Naive thymus-derived CD8-positive, alpha-beta T cell (primary cell): ENCODE measurements at regions of chr9 and their contacts with region 1.

Region 1: DNA sequence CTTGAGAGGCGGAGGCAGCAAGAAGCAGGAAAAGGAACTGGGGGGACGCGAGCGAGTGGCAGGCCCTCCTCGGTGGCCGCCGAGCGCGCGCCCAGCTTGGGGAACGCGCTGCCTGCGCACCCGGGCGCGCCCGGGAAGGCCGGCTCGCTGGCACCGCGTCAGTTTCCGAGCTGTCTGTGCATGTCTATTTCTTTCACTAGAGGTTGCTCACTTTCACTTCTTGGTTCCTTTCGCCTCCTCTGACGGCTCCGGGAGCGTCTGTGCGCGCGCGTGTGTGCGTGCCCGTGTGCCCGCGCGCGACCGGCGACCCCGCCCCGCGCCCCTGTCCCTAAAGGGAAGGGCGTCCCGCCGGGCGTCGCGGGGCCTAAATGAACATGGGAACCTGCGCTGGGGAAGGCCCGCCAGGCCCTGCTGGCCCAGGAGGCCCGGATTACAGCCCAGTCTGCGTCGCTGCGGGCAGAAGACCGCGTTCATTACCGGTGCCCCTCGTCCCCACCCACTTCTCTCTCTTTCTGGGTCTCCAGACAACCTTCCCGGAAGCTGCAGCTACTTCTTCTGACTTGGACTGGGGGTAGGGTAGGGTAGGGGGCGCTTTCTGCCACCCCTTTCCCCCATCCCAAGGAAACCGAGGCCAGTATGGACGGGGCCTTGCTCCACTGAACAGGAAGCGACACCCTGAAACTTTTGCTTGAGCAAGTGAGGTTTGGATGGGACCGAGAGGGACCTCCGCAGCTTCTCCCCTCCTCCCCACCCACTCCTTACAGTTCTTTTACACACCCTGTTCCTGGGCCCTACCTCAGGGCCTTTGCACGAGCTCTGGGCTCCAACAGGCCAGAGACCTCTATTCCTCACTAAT is 205.7 kb upstream of the IER5L start:
- DNase-seq: peak; percentile 67 to 89 (median 78)
- ATAC-seq: peak; percentile 89 to 91
- H3K4me3 Mint-ChIP-seq: peak overlapping the region; percentile 76 to 89 (median 82)
- H3K27ac Mint-ChIP-seq: peak overlapping the region; percentile 90 to 99 (median 97)
- H3K4me1 Mint-ChIP-seq: peaks cover 9 to 23% (median 17%) of the 10 kb centered on the region in 4 donors
- H3K27me3 Mint-ChIP-seq: no peaks in the 10 kb centered on the region

Region 2: GRCh38 chr9:129021081-129021480 is 362.7 kb before region 1 on chr9:
- POLR2A ChIA-PET with region 1: no interaction called
- DNase-seq: no peak
- ATAC-seq: no peak
- H3K4me3 Mint-ChIP-seq: no peak overlapping the region
- H3K27ac Mint-ChIP-seq: peak overlapping the region in 2 of 10 donors; percentile 9 to 48
- H3K4me1 Mint-ChIP-seq: peaks cover 14 to 29% (median 17%) of the 10 kb centered on the region in 4 donors
- H3K27me3 Mint-ChIP-seq: no peaks in the 10 kb centered on the region

Region 3: GRCh38 chr9:129320575-129321263 is 63.1 kb before region 1 on chr9:
- POLR2A ChIA-PET with region 1: interaction called, 20 read pairs
- DNase-seq: peak in 9 of 10 donors; percentile 47 to 79 (median 67)
- ATAC-seq: peak; percentile 93 to 97
- H3K4me3 Mint-ChIP-seq: peak overlapping the region; percentile 74 to 94 (median 89)
- H3K27ac Mint-ChIP-seq: peak overlapping the region; percentile 59 to 96 (median 90)
- H3K4me1 Mint-ChIP-seq: peaks cover 10 to 26% (median 17%) of the 10 kb centered on the region in 4 donors
- H3K27me3 Mint-ChIP-seq: peaks cover 0 to 3% (median 0%) of the 10 kb centered on the region in 5 donors

Region 4: DNA sequence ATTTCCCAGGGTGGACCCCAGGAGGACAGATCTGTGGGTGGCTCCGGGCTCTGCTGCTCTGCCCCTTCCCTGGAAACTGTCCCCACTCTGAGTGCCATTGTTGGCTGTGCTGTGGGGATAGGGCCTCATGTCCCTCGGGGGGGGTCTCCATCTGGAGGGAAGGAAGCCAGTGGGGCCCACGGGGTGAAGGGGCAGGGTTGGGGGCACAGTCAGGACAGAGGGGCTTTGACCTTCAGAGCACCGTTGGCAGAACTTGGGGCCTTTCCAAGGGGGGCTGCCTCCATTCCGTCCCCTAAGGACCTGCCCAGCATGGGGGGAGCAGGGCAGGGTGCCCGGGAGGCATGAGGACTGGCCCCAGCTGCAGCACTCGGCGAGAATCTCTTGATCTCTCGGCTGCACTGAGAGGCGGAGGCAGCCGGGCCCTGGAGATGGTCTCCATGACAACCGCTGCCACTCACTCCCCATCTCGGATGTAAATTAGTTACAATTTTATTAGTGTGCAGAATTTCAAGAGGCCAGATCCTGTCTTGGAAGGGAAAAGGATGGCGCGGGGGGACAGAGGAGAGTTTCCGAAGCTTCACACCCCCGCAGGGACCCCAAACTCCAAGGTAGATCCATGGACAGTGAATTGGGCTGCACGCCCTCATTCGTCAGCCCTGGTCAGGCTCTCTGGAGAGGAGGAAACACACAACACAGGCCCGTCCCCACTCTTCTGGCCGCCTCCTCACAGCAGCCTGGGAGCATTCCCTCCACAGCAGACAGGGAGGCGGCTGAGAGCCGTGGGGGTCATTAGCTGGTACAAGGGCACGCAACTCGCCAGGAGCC is 10.5 kb after region 1 on chr9:
- POLR2A ChIA-PET with region 1: interaction called, 12 read pairs
- DNase-seq: no peak
- ATAC-seq: no peak
- H3K4me3 Mint-ChIP-seq: no peak overlapping the region
- H3K27ac Mint-ChIP-seq: no peak overlapping the region
- H3K4me1 Mint-ChIP-seq: peaks cover 0 to 6% (median under 1%) of the 10 kb centered on the region in 4 donors
- H3K27me3 Mint-ChIP-seq: no peaks in the 10 kb centered on the region

Region 5: GRCh38 chr9:129422032-129422842 is 38.4 kb after region 1 on chr9:
- POLR2A ChIA-PET with region 1: interaction called, 10 read pairs
- DNase-seq: no peak
- ATAC-seq: peak in 1 of 2 donors; percentile 45
- H3K4me3 Mint-ChIP-seq: no peak overlapping the region
- H3K27ac Mint-ChIP-seq: peak overlapping the region in 9 of 10 donors; percentile 34 to 77 (median 56)
- H3K4me1 Mint-ChIP-seq: peaks cover 8 to 37% (median 19%) of the 10 kb centered on the region in 4 donors
- H3K27me3 Mint-ChIP-seq: no peaks in the 10 kb centered on the region

Region 6: DNA sequence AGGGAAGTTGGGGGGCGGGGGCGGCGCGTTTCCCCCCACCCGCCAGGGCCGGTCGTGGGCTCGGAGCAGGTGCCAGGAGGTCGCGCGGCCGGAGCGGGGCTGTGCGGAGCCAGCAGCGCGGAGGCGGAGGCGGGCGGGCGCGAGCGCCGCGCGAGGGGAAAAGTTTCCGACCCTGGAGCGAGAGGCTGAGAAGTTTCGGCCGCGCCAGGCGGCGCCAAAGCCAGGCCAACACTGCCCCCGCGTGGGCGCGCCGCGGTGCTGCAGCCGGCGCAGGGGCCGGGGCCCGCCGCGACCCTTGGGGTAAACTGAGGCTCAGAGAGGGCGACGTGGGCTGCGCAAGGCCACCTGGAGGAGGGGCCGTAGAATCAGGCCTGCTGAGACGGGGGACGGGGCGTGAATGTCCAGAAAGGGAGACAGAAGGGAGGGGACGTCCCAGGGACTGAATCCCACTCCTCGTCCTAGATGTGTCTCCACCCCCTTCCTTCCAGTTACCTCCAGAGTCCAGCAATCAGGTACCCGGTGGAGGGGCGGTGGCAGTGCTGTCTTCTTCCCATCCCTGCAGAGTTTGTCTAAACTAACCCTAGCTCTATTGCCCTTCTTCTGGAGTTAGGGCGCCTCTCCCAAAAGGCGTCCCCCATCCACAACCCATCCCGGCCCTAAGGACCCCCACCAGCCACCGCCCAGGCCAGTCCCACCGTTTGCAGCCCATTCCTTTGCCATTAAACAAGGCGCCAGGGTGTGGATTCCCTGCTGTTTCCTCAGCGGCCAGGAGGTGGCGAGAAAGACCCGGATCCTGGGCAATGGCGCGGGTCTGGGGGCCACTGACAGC is 226.9 kb after region 1 on chr9:
- POLR2A ChIA-PET with region 1: interaction called, 15 read pairs
- DNase-seq: peak; percentile 59 to 82 (median 72)
- ATAC-seq: peak; percentile 73
- H3K4me3 Mint-ChIP-seq: peak overlapping the region; percentile 75 to 91 (median 80)
- H3K27ac Mint-ChIP-seq: peak overlapping the region in 8 of 10 donors; percentile 14 to 91 (median 68)
- H3K4me1 Mint-ChIP-seq: peaks cover 10 to 44% (median 38%) of the 10 kb centered on the region in 4 donors
- H3K27me3 Mint-ChIP-seq: peaks cover 0 to 1% (median 0%) of the 10 kb centered on the region in 5 donors